ENCODE measurements at regions of chr19 and their contacts with region 1.

Region 1: DNA sequence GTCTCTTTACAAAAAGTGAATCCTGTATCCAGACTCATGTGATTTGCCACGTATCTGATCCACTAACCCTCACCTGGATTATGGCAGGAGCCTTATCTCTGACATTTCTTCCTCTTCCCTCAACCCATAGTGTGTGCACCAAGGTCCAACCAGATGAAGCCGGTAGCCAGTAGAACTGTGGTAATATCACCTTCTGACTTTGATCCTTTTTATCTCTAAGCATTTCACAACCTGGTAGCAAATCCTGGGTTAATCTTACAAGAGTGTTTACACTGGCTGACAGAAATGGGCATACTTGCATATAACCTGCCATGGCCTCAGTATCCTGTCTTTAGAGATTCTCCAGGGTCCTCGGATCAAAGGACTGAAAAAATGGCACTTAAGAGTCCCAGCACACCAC is 1.9 kb downstream of the ZNF417 start:
- DNase-seq: no peak
- ATAC-seq: no peak
- H3K4me3 ChIP-seq: peak overlapping the region; percentile 43
- H3K4me3 Mint-ChIP-seq: peak overlapping the region; percentile 93 to 99 (median 97)
- H3K27ac ChIP-seq: no peak overlapping the region
- H3K27ac Mint-ChIP-seq: peak overlapping the region in 5 of 9 donors; percentile 6 to 73 (median 47)
- H3K4me1 ChIP-seq: peaks cover 9 to 10% of the 10 kb centered on the region in 2 donors
- H3K4me1 Mint-ChIP-seq: peaks cover 21 to 39% (median 36%) of the 10 kb centered on the region in 7 donors
- H3K27me3 ChIP-seq: no peaks in the 10 kb centered on the region
- H3K27me3 Mint-ChIP-seq: no peaks in the 10 kb centered on the region

Region 2: GRCh38 chr19:57389730-57390598 is 524.6 kb before region 1 on chr19 and contains the start of gene ZNF548:
- CTCF ChIA-PET with region 1: no interaction called
- POLR2A ChIA-PET with region 1: no interaction called
- intact Hi-C with region 1: loop called (anchors 1 kb)
- DNase-seq: peak; percentile 85 to 99 (median 92)
- ATAC-seq: peak; percentile 98
- H3K4me3 ChIP-seq: peak within 1 kb of the TSS; percentile 72
- H3K4me3 Mint-ChIP-seq: peak within 1 kb of the TSS; percentile 89 to 100 (median 97)
- H3K27ac ChIP-seq: peak within 1 kb of the TSS; percentile 93
- H3K27ac Mint-ChIP-seq: peak within 1 kb of the TSS; percentile 91 to 100 (median 97)
- H3K4me1 ChIP-seq: peaks cover 13 to 15% of the 10 kb centered on the region in 2 donors
- H3K4me1 Mint-ChIP-seq: peaks cover 11 to 45% (median 29%) of the 10 kb centered on the region in 7 donors
- H3K27me3 ChIP-seq: no peaks in the 10 kb centered on the region
- H3K27me3 Mint-ChIP-seq: no peaks in the 10 kb centered on the region
- total RNA-seq, gene ZNF548: 26.4 to 115 (median 66.9) TPM

Region 3: GRCh38 chr19:57578487-57579205 is 335.9 kb before region 1 on chr19 and contains the start of gene ZNF416:
- CTCF ChIA-PET with region 1: no interaction called
- POLR2A ChIA-PET with region 1: no interaction called
- intact Hi-C with region 1: loop called (anchors 1 to 5 kb)
- DNase-seq: peak; percentile 76 to 98 (median 96)
- ATAC-seq: peak; percentile 99
- H3K4me3 ChIP-seq: peak within 1 kb of the TSS; percentile 73
- H3K4me3 Mint-ChIP-seq: peak within 1 kb of the TSS; percentile 75 to 91 (median 85)
- H3K27ac ChIP-seq: peak within 1 kb of the TSS; percentile 80
- H3K27ac Mint-ChIP-seq: peak within 1 kb of the TSS; percentile 78 to 91 (median 87)
- H3K4me1 ChIP-seq: peaks cover 16 to 20% of the 10 kb centered on the region in 2 donors
- H3K4me1 Mint-ChIP-seq: peaks cover 13 to 35% (median 26%) of the 10 kb centered on the region in 7 donors
- H3K27me3 ChIP-seq: no peaks in the 10 kb centered on the region
- H3K27me3 Mint-ChIP-seq: no peaks in the 10 kb centered on the region
- total RNA-seq, gene ZNF416: 4.4 to 13.8 (median 5.7) TPM

Region 4: DNA sequence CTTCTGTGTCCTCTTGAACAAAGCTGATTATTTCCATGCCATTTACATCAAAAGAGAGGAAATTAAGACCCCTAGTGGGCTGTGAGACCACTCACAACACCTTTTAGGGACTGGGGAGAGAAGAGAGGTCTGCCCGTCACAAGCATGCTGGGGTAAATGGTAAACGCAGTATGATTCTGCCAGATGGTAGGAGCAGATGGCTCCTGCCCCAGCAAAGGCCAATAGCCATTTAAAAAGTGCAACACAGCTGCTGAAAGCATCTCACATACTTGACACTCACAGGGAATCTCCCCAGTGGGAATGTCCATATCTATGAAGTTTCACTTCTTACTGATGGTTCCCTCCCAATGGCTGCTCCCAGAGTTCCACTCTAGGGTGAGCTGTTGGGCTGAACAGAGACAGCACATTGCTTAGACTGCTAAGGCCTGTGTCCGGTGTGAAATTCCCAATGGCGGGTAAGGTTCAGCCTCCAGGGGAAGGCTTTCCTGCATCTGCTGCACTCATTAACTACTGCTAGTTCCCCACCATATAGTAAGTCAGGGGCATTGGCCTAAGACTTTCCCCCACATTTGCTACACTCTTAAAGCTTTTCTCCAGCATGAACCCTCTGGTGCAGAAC is 194.5 kb before region 1 on chr19:
- CTCF ChIA-PET with region 1: no interaction called
- POLR2A ChIA-PET with region 1: no interaction called
- intact Hi-C with region 1: loop called in 1 of 2 experiments (anchors 5 kb)
- DNase-seq: no peak
- ATAC-seq: no peak
- H3K4me3 ChIP-seq: peak overlapping the region; percentile 14
- H3K4me3 Mint-ChIP-seq: no peak overlapping the region
- H3K27ac ChIP-seq: no peak overlapping the region
- H3K27ac Mint-ChIP-seq: no peak overlapping the region
- H3K4me1 ChIP-seq: no peaks in the 10 kb centered on the region
- H3K4me1 Mint-ChIP-seq: peaks cover under 1 to 14% (median 9%) of the 10 kb centered on the region in 7 donors
- H3K27me3 ChIP-seq: no peaks in the 10 kb centered on the region
- H3K27me3 Mint-ChIP-seq: no peaks in the 10 kb centered on the region

Region 5: DNA sequence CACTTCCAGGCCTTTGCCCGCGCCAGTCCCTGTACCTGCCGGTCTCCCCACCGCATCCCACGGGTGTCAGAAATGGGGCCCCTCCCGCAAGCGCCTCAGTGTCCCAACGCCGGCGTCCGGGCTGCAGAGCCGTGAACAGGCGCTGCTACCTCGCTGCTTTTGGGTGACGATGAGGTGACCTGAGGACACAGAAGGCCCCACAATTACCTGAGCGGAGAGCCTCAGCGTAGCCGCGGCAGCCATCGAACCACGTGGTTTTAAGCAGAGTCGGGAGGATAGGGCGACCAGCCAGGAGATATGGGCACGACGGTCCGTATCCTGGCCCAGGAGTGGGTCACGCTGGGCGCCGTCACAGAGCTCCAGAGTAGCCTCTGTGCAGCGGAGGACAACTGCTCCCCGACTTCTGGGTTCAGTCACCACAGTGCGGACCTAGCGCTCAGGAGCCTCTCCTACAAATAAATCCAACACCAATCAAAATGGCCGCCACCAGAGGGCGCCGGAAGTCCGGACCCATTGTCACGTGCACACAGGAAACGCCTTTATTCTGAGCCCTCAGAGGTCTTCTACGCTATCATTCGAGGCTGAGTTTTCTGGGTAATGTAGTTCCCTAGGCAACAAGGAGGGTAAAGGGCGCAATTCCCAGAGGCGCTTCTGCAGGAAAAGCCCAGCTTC is 25.8 kb before region 1 on chr19 and contains the start of gene ZNF814:
- CTCF ChIA-PET with region 1: no interaction called
- POLR2A ChIA-PET with region 1: no interaction called
- intact Hi-C with region 1: loop called in 1 of 2 experiments (anchors 1 kb)
- DNase-seq: peak; percentile 61 to 86 (median 81)
- ATAC-seq: peak; percentile 98
- H3K4me3 ChIP-seq: peak within 1 kb of the TSS; percentile 80
- H3K4me3 Mint-ChIP-seq: peak within 1 kb of the TSS; percentile 84 to 95 (median 90)
- H3K27ac ChIP-seq: peak within 1 kb of the TSS; percentile 74
- H3K27ac Mint-ChIP-seq: peak within 1 kb of the TSS; percentile 66 to 92 (median 86)
- H3K4me1 ChIP-seq: no peaks in the 10 kb centered on the region
- H3K4me1 Mint-ChIP-seq: peaks cover 18 to 33% (median 22%) of the 10 kb centered on the region in 7 donors
- H3K27me3 ChIP-seq: no peaks in the 10 kb centered on the region
- H3K27me3 Mint-ChIP-seq: no peaks in the 10 kb centered on the region
- total RNA-seq, gene ZNF814: 12.7 to 56.9 (median 32.7) TPM

Region 6: DNA sequence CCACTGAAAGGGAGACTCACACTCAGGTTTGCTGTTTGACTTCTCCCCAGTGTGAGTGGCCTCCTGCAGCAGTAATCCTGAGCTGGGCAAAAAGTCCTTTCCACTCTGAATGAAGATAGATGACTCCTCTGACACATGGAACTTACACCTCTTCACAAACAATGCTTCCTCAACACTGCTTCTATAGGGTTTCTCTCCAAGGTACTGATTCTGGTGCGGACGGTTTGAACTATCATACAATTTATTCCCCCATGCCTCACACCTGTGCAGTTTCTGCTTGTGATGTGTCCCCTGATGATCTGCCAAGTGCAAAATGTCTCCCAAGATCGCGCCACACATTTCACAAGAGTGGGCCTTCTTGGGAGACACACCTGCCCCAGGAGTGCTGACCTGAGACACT is 13.1 kb after region 1 on chr19:
- CTCF ChIA-PET with region 1: no interaction called
- POLR2A ChIA-PET with region 1: no interaction called
- intact Hi-C with region 1: no loop called
- DNase-seq: no peak
- ATAC-seq: no peak
- H3K4me3 ChIP-seq: no peak overlapping the region
- H3K4me3 Mint-ChIP-seq: no peak overlapping the region
- H3K27ac ChIP-seq: no peak overlapping the region
- H3K27ac Mint-ChIP-seq: no peak overlapping the region
- H3K4me1 ChIP-seq: no peaks in the 10 kb centered on the region
- H3K4me1 Mint-ChIP-seq: no peaks in the 10 kb centered on the region
- H3K27me3 ChIP-seq: no peaks in the 10 kb centered on the region
- H3K27me3 Mint-ChIP-seq: no peaks in the 10 kb centered on the region

Region 7: GRCh38 chr19:58278157-58279041 is 363.9 kb after region 1 on chr19 and contains the start of gene ZNF8:
- CTCF ChIA-PET with region 1: no interaction called
- POLR2A ChIA-PET with region 1: no interaction called
- intact Hi-C with region 1: loop called in 1 of 2 experiments (anchors 2 kb)
- DNase-seq: peak; percentile 84 to 96 (median 93)
- ATAC-seq: peak; percentile 99
- H3K4me3 ChIP-seq: peak within 1 kb of the TSS; percentile 93
- H3K4me3 Mint-ChIP-seq: peak within 1 kb of the TSS; percentile 89 to 99 (median 95)
- H3K27ac ChIP-seq: peak within 1 kb of the TSS; percentile 80
- H3K27ac Mint-ChIP-seq: peak within 1 kb of the TSS; percentile 88 to 97 (median 96)
- H3K4me1 ChIP-seq: peaks cover 12 to 15% of the 10 kb centered on the region in 2 donors
- H3K4me1 Mint-ChIP-seq: peaks cover 28 to 63% (median 43%) of the 10 kb centered on the region in 7 donors
- H3K27me3 ChIP-seq: no peaks in the 10 kb centered on the region
- H3K27me3 Mint-ChIP-seq: no peaks in the 10 kb centered on the region
- total RNA-seq, gene ZNF8: 5.2 to 10.5 (median 10.0) TPM